Mammary epithelial cell (primary cell): ENCODE measurements at regions of chr2 and their contacts with region 1.

Region 1: GRCh38 chr2:54838585-54839035 is 115.1 kb downstream of the EML6 start:
- DNase-seq: peak; percentile 50
- H3K4me3 ChIP-seq: no peak overlapping the region
- H3K27ac ChIP-seq: no peak overlapping the region
- H3K4me1 ChIP-seq: peaks cover 8% of the 10 kb centered on the region
- H3K27me3 ChIP-seq: no peaks in the 10 kb centered on the region
- CTCF ChIP-seq: peak; percentile 79 to 90

Region 2: DNA sequence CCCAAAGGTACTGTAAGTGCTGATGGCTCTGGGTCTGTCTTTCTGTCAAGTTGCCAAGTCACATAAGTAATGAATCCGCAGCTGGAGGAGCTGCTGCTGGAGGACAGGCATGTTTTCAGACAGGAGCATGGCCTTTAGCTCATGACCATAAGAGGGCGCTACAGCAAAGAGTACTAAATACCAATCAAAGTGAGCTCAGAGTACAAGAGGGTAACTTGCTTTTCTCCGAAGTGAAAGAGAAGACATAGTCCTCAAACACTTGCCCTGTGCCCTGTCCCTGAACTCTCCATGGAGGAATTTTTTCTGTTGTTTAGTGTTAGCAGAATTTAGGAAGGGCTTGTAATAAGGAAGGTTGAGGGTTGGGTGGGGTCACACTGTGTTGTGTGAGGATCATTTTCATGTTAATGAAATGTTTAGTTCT is 173.2 kb before region 1 on chr2:
- CTCF ChIA-PET with region 1: interaction called, 3 read pairs
- dilution Hi-C with region 1: no loop called
- in situ Hi-C with region 1: no loop called
- intact Hi-C with region 1: loop called (anchors 2 kb)
- DNase-seq: no peak
- H3K4me3 ChIP-seq: no peak overlapping the region
- H3K27ac ChIP-seq: no peak overlapping the region
- H3K4me1 ChIP-seq: peaks cover 24% of the 10 kb centered on the region
- H3K27me3 ChIP-seq: no peaks in the 10 kb centered on the region
- CTCF ChIP-seq: peak; percentile 57 to 62

Region 3: DNA sequence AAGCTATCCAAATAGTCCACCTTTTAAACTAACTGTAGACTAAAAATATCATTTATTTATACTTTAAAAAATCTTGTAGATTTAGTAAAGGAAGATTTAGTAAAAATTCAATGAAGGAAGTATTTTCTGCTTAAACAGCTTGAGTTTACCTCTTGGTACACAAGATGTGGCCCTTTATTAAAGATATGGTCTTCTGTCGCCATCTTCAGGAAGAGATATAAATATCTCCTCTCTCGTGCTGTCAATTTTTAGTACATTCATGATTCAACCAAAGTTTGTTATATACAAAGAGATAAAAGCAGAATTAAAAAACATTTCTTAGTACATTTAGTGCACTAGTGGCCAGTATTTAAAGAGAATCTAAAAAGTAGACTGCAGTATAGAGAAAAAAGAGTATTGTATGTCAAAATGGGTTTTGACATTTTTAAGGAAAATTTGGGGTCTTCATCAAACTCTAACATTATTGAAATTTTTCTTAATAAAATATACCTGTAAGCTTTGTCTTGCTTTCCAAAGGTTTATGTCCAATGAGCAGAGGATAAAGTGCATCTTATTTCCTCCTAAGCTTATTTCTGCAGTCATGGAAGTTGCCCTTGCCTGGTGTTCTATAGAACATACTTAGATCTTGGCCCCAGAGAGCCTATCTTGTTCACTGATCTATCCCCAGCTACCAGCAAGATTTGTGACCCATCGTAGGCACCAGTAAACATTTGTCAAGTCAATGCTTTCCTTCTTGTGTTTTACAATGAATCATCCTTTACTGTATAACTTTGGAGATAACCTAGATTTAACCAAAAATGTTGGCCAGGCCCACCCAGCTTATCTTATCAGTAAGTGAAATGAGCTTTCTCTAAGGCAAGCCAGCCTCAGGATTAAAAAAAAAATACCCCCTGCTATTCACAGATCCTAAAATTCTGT is 133.7 kb before region 1 on chr2:
- CTCF ChIA-PET with region 1: interaction called, 3 read pairs
- dilution Hi-C with region 1: no loop called
- in situ Hi-C with region 1: no loop called
- intact Hi-C with region 1: loop called (anchors 5 kb)
- DNase-seq: peak; percentile 40
- H3K4me3 ChIP-seq: no peak overlapping the region
- H3K27ac ChIP-seq: no peak overlapping the region
- H3K4me1 ChIP-seq: peaks cover 11% of the 10 kb centered on the region
- H3K27me3 ChIP-seq: no peaks in the 10 kb centered on the region
- CTCF ChIP-seq: peak; percentile 35 to 57

Region 4: DNA sequence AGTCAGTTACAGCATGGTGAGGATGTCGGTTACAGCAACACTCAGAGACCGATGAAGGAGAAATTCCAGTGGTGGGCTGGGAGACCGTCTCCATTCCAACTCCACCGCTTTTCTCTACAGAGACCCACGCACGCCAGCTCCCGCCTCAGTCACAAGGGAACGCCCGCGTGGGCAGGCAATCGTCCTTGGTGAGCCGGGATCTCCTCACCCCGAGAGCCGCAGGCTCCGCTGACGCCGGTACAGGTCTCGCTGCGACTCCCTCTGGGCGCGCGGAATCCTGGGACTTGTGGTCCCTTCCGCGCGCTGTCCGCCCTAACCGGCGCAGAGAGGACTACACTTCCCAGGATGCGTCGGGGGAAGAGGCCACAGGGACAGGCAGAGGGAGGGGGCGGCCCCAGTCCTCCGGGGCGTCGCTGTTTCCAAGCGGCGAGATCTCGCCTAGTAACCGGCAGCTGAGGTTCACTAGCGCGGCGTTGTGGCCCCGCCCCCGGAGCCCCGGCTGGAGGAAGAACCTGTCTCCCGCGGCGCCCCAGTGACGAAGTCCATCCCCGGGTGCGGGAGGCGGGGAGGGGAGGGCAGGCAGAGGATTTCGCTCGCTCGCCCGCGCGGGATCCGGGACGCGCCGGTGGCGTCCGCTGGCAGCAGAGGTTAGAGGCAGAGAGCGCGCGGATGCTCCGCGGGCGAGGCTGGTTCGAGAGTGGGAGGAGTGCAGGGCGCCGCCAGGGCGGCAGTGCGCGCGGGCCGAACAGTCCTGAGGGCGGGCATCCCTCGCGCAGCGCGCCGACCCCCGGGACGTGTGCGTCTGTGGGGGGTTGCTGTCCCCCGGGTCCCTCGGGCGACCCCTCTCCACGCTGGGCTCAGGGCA is 115.2 kb before region 1 on chr2 and contains the start of gene EML6:
- CTCF ChIA-PET with region 1: no interaction called
- dilution Hi-C with region 1: no loop called
- in situ Hi-C with region 1: loop called in 1 of 2 experiments (anchors 10 kb)
- intact Hi-C with region 1: loop called (anchors 1 kb)
- DNase-seq: peak; percentile 99
- H3K4me3 ChIP-seq: peak within 1 kb of the TSS; percentile 79 to 88 (median 82)
- H3K27ac ChIP-seq: peak within 1 kb of the TSS; percentile 89
- H3K4me1 ChIP-seq: peaks cover 27% of the 10 kb centered on the region
- H3K27me3 ChIP-seq: no peaks in the 10 kb centered on the region
- CTCF ChIP-seq: peak in 1 of 2 donors; percentile 27
- total RNA-seq, gene EML6: 0.83 to 0.94 TPM

Region 5: DNA sequence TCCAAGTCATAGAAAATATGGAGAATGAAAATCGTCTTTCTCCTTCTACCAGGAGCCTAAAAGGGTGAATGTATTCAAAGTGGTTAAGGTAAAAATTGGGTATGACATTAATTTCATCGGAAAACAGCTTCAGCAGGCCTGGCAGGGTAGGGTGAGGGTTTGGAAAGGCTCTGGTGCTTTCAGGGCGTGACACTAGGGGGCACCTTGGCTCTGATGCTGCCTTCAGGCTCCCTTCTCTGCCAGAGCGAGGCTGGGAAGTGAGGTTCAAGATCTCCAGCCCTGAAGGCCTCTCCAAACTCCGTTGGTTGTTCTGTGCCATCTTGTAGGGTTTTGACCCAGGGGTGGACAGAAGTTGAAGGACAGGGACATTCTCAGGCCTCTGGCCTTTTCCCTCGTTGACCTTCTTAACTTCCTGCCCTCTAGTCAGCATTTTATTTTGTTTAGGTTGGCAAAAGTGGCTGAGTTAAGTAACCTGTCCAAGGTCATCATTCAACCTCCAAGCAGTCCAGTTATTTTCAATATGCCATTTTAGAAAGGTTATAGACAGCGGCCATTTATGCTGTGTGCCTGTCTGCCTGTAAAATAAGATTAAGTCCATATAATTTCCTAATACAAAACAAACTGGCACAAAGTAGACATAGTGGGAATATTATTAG is 74.8 kb before region 1 on chr2:
- CTCF ChIA-PET with region 1: interaction called, 5 read pairs
- dilution Hi-C with region 1: no loop called
- in situ Hi-C with region 1: no loop called
- intact Hi-C with region 1: loop called (anchors 1 kb)
- DNase-seq: no peak
- H3K4me3 ChIP-seq: no peak overlapping the region
- H3K27ac ChIP-seq: no peak overlapping the region
- H3K4me1 ChIP-seq: peaks cover 15% of the 10 kb centered on the region
- H3K27me3 ChIP-seq: no peaks in the 10 kb centered on the region
- CTCF ChIP-seq: peak; percentile 38 to 63

Region 6: DNA sequence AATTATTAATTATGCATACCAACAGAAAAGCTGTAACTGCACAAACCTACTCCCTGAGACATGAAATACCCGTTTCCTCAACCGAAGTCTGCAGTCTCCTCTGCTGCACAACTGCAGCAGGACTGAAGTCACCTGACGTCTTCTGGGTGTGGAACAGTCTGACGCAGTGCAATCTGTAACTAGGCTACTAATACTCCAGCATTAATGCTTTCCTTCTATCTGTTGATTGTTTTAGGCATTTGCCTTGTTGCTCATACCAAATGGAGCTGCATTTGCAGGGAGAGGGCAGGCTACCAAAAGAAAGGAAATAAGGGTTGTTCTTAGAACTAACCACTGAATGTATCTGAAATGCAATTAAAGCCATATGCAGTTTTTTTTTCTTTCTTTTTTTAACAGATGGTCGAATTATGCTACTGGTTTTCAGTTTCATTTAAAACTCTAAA is 171.6 kb after region 1 on chr2:
- CTCF ChIA-PET with region 1: no interaction called
- dilution Hi-C with region 1: no loop called
- in situ Hi-C with region 1: no loop called
- intact Hi-C with region 1: loop called (anchors 5 kb)
- DNase-seq: peak; percentile 85
- H3K4me3 ChIP-seq: peak overlapping the region; percentile 46 to 52 (median 50)
- H3K27ac ChIP-seq: peak overlapping the region; percentile 85
- H3K4me1 ChIP-seq: peaks cover 63% of the 10 kb centered on the region
- H3K27me3 ChIP-seq: no peaks in the 10 kb centered on the region
- CTCF ChIP-seq: no peak